ENCODE measurements at regions of chr4 and their contacts with region 1.

Region 1: DNA sequence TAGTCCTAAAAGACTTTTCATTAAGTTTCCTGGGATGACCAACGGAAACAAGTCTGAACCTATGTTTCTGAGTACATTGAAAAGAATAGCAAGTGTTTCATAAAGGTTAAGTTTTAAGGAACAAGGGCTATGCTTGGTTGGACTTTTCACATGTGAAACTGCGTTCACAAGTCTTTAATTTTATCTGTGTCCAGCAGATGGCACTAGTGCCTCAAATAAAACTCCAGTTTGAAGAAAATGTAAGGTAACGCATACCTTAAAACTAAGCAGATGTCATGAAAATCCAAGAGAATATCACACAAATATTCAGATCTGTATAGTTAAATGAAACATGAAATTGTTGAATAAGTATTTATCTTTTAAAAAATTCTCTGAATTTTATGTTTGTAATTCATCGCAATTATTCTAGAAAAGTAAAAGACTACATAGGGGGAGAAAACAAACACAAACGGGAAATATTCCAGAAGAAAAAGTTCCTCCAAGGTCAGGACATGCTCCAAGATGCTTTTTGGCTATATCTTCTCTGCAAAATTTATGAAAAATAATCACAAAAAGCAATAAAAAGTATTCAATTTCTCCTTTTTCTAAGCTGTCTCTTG is 89.6 kb upstream of the MAD2L1 start:
- ATAC-seq: peak in 5 of 8 experiments; percentile 36 to 61 (median 43)
- H3K4me3 ChIP-seq: no peak overlapping the region
- H3K27ac ChIP-seq: no peak overlapping the region
- H3K4me1 ChIP-seq: peaks cover 6 to 15% of the 10 kb centered on the region in 2 donors

Region 2: GRCh38 chr4:118352843-118353533 is 1803.2 kb before region 1 on chr4 and contains the start of gene PRSS12:
- in situ Hi-C with region 1: no loop called
- ATAC-seq: peak; percentile 64 to 95 (median 90)
- H3K4me3 ChIP-seq: peak within 1 kb of the TSS; percentile 44 to 55 (median 48)
- H3K27ac ChIP-seq: no peak within 1 kb of the TSS
- H3K4me1 ChIP-seq: no peaks in the 10 kb centered on the region
- total RNA-seq, gene PRSS12: 1.9 to 1,684 (median 6.1) TPM

Region 3: GRCh38 chr4:120718979-120719566 is 562.9 kb after region 1 on chr4:
- in situ Hi-C with region 1: loop called in 1 of 9 experiments (anchors 25 kb)
- ATAC-seq: peak in 7 of 8 experiments; percentile 39 to 93 (median 70)
- H3K4me3 ChIP-seq: no peak overlapping the region
- H3K27ac ChIP-seq: no peak overlapping the region
- H3K4me1 ChIP-seq: peaks cover 0 to 6% of the 10 kb centered on the region in 2 donors

Region 4: DNA sequence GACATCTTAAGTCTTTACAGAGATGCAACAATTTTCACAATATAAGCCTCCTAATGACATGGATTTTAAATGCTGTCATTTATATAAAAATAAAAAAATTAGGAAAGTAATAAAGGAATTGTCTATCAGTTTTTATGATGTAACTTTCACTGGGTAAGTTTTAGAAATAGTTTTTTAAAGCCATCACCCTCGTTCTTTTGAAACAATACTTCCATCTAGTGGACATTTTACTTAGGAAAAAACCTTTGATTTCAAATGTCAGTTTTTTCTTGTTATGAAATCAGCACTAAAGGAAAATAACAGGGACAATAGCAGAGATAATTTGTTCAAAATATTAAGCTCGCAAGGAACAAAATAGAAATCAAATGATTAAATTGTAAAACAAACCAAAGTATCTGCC is 940.4 kb after region 1 on chr4:
- in situ Hi-C with region 1: loop called (anchors 10 to 25 kb)
- ATAC-seq: peak in 1 of 8 experiments; percentile 14
- H3K4me3 ChIP-seq: no peak overlapping the region
- H3K27ac ChIP-seq: no peak overlapping the region
- H3K4me1 ChIP-seq: no peaks in the 10 kb centered on the region

Region 5: DNA sequence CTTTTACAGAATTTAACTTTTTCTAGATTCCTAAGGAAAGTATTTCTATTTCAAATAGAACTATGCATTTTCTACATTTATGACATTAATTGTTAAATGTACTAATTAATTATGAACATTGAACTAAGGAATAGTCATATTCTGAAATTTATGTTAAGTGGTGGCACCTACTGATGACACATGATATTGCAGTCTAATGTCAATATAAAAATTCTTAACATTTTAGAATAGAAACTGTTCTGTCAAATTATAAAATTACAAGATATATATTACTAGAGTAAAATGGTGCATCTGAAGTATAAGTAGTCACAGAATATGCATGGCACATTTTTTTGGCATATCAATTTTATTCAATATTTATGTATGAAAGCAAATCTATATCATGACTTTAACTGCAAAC is 956.3 kb after region 1 on chr4:
- in situ Hi-C with region 1: loop called in 2 of 9 experiments (anchors 25 kb)
- ATAC-seq: no peak
- H3K4me3 ChIP-seq: no peak overlapping the region
- H3K27ac ChIP-seq: no peak overlapping the region
- H3K4me1 ChIP-seq: peaks cover 4 to 9% of the 10 kb centered on the region in 2 donors